ENCODE measurements at regions of chr17 and their contacts with region 1.

Region 1: DNA sequence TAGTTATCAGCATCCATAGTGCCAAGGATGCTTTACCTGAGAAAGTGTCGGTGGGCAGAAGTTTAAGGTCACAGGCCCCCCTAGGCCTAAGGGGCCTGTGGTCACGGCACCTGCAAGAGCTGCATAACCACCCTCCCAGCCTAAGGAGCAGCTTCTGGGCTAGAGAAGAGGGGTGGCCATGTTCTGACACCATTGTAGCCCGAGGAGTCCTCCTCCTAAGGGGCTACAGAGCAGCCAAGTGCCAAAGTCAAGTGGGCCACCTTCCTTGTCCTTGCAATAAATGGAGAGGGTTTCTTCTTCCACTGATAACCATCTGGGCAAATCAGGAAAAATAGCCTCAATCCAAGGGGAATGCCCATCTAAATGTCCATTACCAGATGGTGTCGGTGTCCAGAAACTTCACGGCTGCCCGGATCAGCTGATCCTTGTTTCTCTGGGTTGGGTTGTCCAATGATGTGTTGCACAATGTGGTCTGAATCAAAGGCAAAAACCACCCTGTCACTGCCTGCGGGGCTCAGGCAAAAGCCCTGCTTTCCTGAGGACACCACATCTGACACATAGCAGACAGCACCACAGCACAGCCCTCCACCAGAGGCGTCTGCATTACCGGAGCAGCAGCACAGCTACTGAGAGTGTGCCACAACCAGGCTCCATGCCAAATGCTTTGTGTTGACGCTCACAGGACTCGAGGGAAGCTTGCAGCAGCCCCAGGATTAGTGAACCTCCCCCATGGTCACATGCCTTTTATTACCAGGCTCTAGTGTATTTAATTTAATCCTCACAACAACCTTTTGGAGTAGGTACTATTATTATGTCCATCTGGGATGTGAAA is 12.8 kb downstream of the ATPAF2 start:
- DNase-seq: no peak
- ATAC-seq: peak in 2 of 4 donors; percentile 22 to 58
- H3K4me3 ChIP-seq: no peak overlapping the region
- H3K27ac ChIP-seq: no peak overlapping the region
- H3K4me1 ChIP-seq: no peaks in the 10 kb centered on the region
- H3K27me3 ChIP-seq: no peaks in the 10 kb centered on the region
- CTCF ChIP-seq: no peak

Region 2: DNA sequence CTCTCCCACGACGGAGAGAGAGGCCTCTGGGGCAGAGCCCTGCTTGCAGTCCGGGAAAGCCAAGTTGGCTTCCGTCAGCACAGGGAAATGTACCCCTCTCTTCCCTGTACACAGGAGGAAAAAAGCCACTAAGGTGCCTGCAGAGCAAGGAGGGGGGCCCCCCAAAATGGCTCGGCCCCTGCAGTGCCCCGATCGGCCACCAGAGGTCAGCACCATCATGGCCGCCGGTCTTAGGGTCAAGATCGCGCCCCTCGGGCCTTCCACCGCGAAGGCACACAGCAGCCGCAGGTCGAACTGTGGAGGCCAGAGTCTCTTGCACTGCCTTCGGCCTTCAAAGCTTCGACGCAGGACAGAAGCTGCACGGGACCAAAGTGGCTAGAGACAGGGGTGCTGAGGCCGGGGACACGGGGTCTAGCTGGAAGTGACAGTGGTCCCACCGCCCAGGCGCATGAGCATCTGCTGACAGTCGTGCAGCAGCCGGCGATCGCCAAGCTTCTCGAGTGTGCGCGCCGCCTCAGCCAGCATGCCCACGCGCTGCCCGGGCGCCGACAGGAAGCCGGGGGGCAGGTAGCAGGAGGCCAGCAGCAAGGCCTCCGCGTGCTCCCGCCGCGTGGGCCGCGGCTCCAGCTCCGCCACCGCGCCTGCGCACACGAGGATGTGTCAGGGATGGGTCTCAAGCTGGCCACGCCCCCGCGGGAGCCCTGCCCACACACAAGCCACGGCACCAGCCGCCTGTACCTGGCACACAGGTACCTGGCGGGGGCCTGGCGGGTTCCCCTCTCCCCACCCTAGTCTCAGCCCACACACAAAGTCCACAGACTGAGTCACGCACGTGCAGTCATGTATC is 213.7 kb before region 1 on chr17:
- intact Hi-C with region 1: no loop called
- DNase-seq: peak; percentile 57 to 92 (median 77)
- ATAC-seq: peak; percentile 59 to 86 (median 75)
- H3K4me3 ChIP-seq: no peak overlapping the region
- H3K27ac ChIP-seq: peak overlapping the region in 2 of 4 donors; percentile 1 to 30
- H3K4me1 ChIP-seq: no peaks in the 10 kb centered on the region
- H3K27me3 ChIP-seq: no peaks in the 10 kb centered on the region
- CTCF ChIP-seq: peak; percentile 98 to 100 (median 98)

Region 3: GRCh38 chr17:17890773-17891759 is 135.1 kb before region 1 on chr17:
- intact Hi-C with region 1: loop called in 2 of 3 experiments (anchors 10 kb)
- DNase-seq: peak in 3 of 6 donors; percentile 20 to 50 (median 33)
- ATAC-seq: peak; percentile 80 to 96 (median 93)
- H3K4me3 ChIP-seq: no peak overlapping the region
- H3K27ac ChIP-seq: no peak overlapping the region
- H3K4me1 ChIP-seq: no peaks in the 10 kb centered on the region
- H3K27me3 ChIP-seq: no peaks in the 10 kb centered on the region
- CTCF ChIP-seq: peak in 3 of 4 donors; percentile 23 to 49 (median 36)

Region 4: DNA sequence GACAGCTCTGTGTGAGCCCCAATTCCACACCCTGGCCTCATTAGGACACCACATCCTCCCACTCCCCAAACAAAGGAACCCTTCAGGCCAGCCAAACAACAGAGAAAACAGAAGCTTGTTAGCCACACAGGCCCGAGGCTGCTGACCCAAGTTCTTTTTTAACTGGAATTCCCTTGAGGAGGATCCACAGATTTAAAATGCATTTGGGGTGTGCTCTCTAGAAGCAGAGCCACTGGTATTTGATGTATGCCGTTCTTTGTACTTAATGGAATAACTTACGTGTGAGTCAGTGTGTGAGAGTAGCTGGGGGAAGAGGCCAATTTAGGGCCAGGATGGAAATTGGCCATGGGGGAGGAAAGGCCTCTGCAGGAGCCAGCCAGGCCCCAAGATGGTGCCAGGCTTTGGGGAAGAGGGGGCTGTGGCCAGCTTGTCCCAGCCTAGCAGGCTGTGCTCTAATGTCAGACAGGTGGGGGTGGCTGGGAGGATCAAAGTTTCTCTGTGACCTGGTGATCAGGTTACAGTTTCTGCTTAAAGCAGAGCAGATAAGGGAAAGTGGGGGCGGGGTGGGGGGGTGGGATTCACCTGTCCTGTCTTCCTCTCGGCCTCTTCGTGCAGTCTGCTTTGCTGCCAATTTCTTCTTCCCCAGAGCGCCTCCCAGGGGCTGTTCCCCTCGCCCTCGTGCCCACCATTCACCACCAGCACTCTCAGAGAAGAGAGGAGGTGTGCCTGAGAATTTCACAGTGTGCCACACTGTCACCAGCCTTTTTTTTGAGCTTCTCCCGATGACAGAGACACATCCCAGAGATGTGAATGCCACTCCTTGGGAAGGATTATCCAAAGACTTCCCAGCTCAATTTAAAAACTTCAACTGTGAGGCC is 104.7 kb before region 1 on chr17:
- intact Hi-C with region 1: no loop called
- DNase-seq: peak in 1 of 6 donors; percentile 14
- ATAC-seq: peak in 3 of 4 donors; percentile 31 to 44 (median 33)
- H3K4me3 ChIP-seq: no peak overlapping the region
- H3K27ac ChIP-seq: peak overlapping the region; percentile 56 to 74 (median 66)
- H3K4me1 ChIP-seq: peaks cover 3 to 18% (median 9%) of the 10 kb centered on the region in 3 donors
- H3K27me3 ChIP-seq: no peaks in the 10 kb centered on the region
- CTCF ChIP-seq: no peak